Lower leg skin (tissue), 4 donors: ENCODE measurements at regions of chr11 and their contacts with region 1.

Region 1: GRCh38 chr11:119196833-119197483 is 9.2 kb upstream of the CBL start:
- DNase-seq: peak in 1 of 2 donors; percentile 75
- H3K4me3 ChIP-seq: no peak overlapping the region
- CTCF ChIP-seq: peak in 1 of 3 donors; percentile 54
- POLR2A ChIP-seq: no peak

Region 2: GRCh38 chr11:119044708-119045107 is 152.2 kb before region 1 on chr11:
- intact Hi-C with region 1: loop called (anchors 10 kb)
- DNase-seq: no peak
- H3K4me3 ChIP-seq: no peak overlapping the region
- CTCF ChIP-seq: no peak
- POLR2A ChIP-seq: no peak

Region 3: DNA sequence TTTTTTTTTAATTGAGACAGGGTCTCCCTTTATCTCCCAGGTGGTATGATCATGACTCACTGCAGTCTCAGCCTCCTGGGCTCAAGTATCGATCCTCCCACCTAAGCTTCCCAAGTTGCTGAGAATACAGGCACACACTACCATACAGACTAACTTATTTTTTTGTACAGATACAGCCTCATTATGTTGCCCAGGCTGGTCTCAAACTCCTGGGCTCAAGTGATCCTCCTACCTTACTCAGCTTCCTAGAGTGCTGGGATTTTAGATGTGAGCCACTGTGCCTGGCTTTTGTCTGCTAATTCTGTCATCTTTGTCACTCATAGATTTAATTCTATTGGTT is 52.7 kb after region 1 on chr11:
- intact Hi-C with region 1: no loop called
- DNase-seq: no peak
- H3K4me3 ChIP-seq: no peak overlapping the region
- CTCF ChIP-seq: no peak
- POLR2A ChIP-seq: no peak